Naive thymus-derived CD4-positive, alpha-beta T cell (primary cell): ENCODE measurements at regions of chr3 and their contacts with region 1.

Region 1: DNA sequence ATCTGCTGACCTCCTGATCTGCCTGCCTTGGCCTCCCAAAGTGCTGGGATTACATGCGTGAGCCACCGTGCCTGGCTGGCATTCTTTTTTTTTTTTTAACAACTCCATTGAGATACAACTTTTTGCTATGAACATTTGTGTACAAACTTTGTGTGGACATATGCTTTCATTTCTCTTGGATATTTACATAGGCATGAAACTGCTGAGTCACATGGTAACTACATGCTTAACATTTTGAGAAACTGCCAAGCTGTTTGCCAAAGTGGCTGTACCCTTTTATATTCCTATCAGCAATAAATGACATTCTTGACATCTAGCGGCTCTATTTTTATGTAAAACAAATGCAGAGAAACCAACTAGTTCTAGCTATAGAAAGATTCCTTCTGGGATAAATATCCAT is 8.7 kb upstream of the YEATS2 start:
- DNase-seq: no peak
- ATAC-seq: no peak
- H3K4me3 ChIP-seq: no peak overlapping the region
- H3K4me3 Mint-ChIP-seq: no peak overlapping the region
- H3K27ac ChIP-seq: no peak overlapping the region
- H3K27ac Mint-ChIP-seq: no peak overlapping the region
- H3K4me1 ChIP-seq: no peaks in the 10 kb centered on the region
- H3K4me1 Mint-ChIP-seq: no peaks in the 10 kb centered on the region
- H3K27me3 ChIP-seq: no peaks in the 10 kb centered on the region
- H3K27me3 Mint-ChIP-seq: no peaks in the 10 kb centered on the region

Region 2: DNA sequence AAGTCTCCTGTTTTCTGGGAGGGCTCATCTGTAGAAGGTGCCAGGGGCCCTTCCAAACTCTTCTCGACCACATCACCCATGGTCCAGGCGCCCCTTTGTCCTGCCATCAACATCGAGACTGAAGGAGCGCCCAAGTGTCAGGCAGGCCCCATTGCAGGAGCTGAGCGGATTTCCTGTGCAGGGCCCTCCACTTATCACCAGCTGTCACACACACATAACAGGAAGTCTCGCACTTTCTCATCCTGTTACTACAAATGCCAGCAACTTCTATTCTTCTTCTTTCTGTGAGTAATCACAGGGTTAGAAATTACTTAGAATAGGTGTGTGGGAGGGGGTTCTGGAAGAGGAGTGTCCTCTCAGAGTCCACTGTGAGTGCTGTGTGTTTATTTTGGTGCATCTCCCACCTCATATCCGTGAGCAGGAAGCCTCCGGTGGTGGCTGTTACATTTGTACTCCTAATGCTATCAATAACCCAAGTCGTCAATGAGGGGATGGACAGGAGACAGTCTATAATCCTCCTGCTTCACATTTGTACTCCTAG is 133.3 kb before region 1 on chr3 and contains the start of gene KLHL6:
- CTCF ChIA-PET with region 1: no interaction called
- POLR2A ChIA-PET with region 1: no interaction called
- intact Hi-C with region 1: no loop called
- DNase-seq: peak; percentile 47 to 81 (median 74)
- ATAC-seq: peak; percentile 93
- H3K4me3 ChIP-seq: peak within 1 kb of the TSS; percentile 82
- H3K4me3 Mint-ChIP-seq: peak within 1 kb of the TSS; percentile 95 to 100 (median 98)
- H3K27ac ChIP-seq: peak within 1 kb of the TSS; percentile 78
- H3K27ac Mint-ChIP-seq: peak within 1 kb of the TSS; percentile 95 to 100 (median 98)
- H3K4me1 ChIP-seq: peaks cover 15 to 17% of the 10 kb centered on the region in 2 donors
- H3K4me1 Mint-ChIP-seq: peaks cover 46 to 58% (median 50%) of the 10 kb centered on the region in 7 donors
- H3K27me3 ChIP-seq: no peaks in the 10 kb centered on the region
- H3K27me3 Mint-ChIP-seq: no peaks in the 10 kb centered on the region
- total RNA-seq, gene KLHL6: 37.7 to 72.9 (median 41.5) TPM

Region 3: DNA sequence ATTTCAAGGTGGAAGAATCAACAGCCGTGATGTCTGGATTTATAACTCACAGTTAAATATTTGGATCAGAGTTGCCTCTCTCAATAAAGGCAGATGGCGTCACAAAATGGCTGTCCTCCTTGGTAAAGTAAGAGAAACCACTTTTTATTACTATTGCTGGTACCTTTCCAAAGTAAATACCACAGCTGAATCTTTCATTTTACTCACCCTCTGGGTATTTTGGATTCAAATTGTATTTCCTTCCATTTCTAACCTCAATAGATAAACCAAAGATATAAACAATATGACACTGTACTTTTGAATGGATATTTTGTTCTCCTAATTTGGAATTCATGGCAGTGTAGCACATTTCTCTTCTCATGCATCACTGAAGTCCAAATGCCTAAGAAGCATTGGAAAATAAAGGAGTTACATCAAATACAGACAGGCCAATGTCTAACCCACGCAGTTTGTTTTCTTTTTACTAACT is 23.9 kb before region 1 on chr3:
- CTCF ChIA-PET with region 1: interaction called, 3 read pairs
- POLR2A ChIA-PET with region 1: no interaction called
- intact Hi-C with region 1: loop called in 1 of 2 experiments (anchors 2 kb)
- DNase-seq: no peak
- ATAC-seq: no peak
- H3K4me3 ChIP-seq: no peak overlapping the region
- H3K4me3 Mint-ChIP-seq: no peak overlapping the region
- H3K27ac ChIP-seq: no peak overlapping the region
- H3K27ac Mint-ChIP-seq: no peak overlapping the region
- H3K4me1 ChIP-seq: no peaks in the 10 kb centered on the region
- H3K4me1 Mint-ChIP-seq: peaks cover 0 to 30% (median 19%) of the 10 kb centered on the region in 7 donors
- H3K27me3 ChIP-seq: no peaks in the 10 kb centered on the region
- H3K27me3 Mint-ChIP-seq: no peaks in the 10 kb centered on the region